ENCODE measurements at regions of chr11 and their contacts with region 1.

Region 1: GRCh38 chr11:82229341-82229740 is 504.3 kb downstream of the FAM181B start:
- DNase-seq: no peak

Region 2: GRCh38 chr11:81644239-81644840 is 585.0 kb before region 1 on chr11:
- intact Hi-C with region 1: loop called (anchors 10 kb)
- DNase-seq: no peak

Measured in cardiac septum (tissue), 1 donor.